AG04450 (cell line): ENCODE measurements at regions of chr9 and their contacts with region 1.

Region 1: DNA sequence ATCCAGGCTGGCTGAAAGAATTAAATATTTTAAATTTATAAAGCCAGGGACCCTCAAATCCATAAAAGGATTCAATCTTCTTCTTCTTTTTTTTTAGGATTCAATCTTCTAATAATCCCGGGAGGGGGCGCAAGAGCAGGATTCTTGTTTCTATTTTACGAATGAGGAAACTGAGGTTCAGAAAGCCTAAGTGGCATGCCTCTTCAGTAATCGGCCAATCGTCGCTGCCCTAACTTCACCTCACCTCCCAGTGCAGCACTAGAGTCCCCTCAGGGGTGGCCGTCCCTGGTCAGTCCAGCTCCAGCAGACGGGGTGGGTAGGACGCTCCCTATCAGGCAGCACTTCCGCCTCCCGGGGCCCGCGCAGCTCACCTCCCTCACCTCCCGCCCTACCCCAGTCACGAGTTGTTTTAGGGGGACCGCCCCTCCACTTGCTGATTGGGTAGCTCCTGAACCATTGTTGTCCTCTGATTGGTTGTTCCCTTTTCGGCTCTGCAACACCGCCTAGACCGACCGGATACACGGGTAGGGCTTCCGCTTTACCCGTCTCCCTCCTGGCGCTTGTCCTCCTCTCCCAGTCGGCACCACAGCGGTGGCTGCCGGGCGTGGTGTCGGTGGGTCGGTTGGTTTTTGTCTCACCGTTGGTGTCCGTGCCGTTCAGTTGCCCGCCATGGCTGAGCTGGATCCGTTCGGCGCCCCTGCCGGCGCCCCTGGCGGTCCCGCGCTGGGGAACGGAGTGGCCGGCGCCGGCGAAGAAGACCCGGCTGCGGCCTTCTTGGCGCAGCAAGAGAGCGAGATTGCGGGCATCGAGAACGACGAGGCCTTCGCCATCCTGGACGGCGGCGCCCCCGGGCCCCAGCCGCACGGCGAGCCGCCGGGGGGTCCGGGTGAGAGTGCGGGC is at the start of gene CLTA:
- DNase-seq: peak; percentile 92
- H3K4me3 ChIP-seq: peak within 1 kb of the TSS; percentile 96
- H3K27ac ChIP-seq: peak within 1 kb of the TSS; percentile 89
- H3K27me3 ChIP-seq: no peaks in the 10 kb centered on the region
- CTCF ChIP-seq: peak; percentile 74
- polyA plus RNA-seq, gene CLTA: 314 and 364 TPM in 2 replicates

Region 2: DNA sequence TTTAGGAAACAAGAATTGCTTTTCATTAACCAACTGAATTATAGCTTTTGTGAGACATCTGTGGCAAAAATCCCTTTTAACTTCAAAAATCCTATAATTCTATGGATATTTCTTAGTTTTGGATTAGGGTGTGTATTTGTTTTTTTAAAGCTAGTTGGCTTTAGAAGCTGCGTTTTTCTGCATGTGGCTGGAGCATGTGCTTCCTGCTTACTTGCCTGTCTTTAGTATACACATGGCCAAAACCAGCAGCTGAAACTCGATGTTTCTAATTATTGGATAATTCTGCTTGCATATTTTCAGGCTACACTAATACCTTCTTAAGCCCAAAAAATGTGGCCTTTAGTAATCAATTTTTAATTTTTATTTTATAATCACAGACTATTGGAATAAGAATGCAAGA is 145.0 kb before region 1 on chr9:
- CTCF ChIA-PET with region 1: no interaction called
- POLR2A ChIA-PET with region 1: interaction called, 10 read pairs
- DNase-seq: no peak
- H3K4me3 ChIP-seq: no peak overlapping the region
- H3K27ac ChIP-seq: no peak overlapping the region
- H3K27me3 ChIP-seq: no peaks in the 10 kb centered on the region
- CTCF ChIP-seq: no peak

Region 3: DNA sequence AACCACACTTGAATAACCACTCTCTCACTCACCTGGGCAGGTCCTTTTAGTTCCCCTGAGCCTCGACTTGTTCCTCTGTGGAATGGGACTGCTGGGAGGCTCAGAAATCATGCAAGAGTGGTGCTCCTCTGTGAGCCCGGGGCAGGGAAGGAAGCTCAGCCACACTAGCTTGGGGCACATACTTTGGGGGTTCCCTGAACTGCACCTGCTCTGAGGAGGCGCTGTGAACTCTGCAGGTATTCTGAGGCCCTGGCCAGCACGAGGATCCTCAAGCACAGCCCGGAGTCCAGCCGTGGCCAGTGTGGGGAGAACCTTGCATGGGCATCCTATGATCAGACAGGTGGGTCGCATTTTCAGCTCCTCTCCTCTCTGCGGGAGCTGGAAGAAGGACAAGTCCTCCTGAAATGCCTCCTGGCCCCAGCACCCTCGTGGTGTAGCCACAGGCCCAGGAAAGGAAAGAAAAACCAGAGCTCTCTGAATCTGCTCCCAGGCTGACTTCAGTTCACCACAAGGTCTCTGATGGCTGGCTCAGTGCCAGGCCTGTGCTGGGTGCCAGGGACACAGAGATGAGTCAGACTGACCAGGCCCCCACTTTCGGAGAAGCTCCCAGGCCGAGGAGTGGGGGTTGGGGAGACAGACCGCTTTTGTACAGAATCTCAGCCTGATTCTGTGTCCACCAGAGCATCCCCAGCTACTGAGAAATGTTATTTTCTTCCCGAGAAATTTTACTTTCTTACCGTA is 42.2 kb before region 1 on chr9:
- CTCF ChIA-PET with region 1: interaction called, 5 read pairs
- POLR2A ChIA-PET with region 1: interaction called, 13 read pairs
- DNase-seq: peak; percentile 92
- H3K4me3 ChIP-seq: peak overlapping the region; percentile 7; the same call in 1 of the 2 replicates
- H3K27ac ChIP-seq: peak overlapping the region; percentile 70
- H3K27me3 ChIP-seq: no peaks in the 10 kb centered on the region
- CTCF ChIP-seq: no peak

Region 4: DNA sequence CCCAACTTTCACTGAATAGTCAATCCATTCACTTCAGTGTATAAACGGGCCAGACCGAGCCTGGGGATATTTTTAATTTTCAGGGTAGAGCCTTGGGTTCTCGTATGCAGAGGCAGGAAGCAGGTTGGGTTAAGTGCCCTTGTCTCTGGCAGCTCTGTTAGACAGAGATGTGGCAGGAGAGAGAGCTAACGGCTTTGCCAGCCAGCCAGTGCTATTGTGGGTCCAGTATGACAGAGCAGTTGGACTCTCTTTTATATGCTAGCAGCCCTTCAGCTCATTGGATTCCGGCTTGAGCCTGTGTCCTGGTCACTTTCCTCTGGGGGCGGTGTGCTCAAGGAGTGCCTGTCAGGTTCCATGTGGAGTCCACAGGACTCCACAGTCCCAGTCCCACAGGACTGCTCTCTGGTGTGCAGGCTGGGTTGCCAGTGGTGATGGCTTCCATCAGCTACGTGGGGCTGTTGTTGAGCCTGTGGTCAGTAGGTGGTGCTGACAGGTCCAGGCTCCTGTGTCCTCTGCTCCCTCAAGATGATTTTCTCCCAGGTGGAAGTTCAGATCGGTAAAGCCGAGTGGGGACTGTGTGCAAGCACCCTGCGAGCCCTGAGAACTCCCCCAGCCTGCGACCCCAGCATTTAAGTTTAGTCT is 14.4 kb after region 1 on chr9:
- CTCF ChIA-PET with region 1: interaction called, 16 read pairs
- POLR2A ChIA-PET with region 1: interaction called, 20 read pairs
- DNase-seq: no peak
- H3K4me3 ChIP-seq: no peak overlapping the region
- H3K27ac ChIP-seq: no peak overlapping the region
- H3K27me3 ChIP-seq: no peaks in the 10 kb centered on the region
- CTCF ChIP-seq: peak; percentile 31